Left lung (tissue), 14 donors: ENCODE measurements at regions of chr2 and their contacts with region 1.

Region 1: GRCh38 chr2:177212106-177212890 is at the start of gene HNRNPA3:
- DNase-seq: peak; percentile 99 to 100 (median 100)
- ATAC-seq: peak; percentile 97
- H3K4me3 ChIP-seq: peak within 1 kb of the TSS; percentile 85
- H3K27ac ChIP-seq: peak within 1 kb of the TSS; percentile 100
- H3K4me1 ChIP-seq: peaks cover 22 to 51% of the 10 kb centered on the region in 2 donors
- H3K27me3 ChIP-seq: no peaks in the 10 kb centered on the region
- CTCF ChIP-seq: no peak
- polyA plus RNA-seq, gene HNRNPA3: 501 to 688 (median 592) TPM

Region 2: DNA sequence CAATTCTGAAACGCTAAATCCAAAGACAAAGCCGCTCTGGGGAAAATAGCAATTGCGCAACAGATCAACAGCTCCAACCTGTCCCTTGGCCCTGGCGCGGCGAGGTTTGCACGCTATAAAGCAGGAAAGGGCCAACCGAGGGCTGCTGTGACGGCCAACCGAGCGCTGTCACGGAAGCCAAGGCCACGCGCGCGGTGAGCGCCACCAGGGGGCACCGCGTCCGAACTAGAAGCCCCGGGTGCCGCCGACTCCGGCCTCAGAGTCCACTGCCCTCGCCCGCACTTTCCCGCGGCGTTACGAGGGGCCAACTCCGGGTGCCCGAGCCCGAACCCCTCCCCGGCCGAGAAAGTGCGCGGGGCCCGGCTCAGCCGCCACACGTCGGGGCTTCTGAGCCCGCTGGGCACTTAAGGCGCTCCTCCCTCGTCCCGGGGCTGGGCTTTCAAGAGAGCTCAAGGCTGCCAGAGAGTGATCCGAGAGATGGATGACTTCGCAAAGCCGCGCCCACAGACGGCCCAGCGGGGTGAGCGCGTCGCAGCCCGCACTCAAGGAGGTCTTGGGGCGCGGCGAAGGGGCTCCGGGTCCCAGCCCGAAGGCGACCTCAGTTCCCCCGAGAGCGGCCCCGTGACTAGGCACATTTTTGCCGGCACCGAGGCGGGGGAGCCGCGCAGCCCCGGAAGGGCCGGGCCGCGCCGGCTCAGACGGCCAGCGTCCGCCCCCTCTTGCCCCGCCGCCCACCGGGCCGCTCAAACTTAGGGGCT is 51.3 kb after region 1 on chr2:
- intact Hi-C with region 1: loop called in 1 of 2 experiments (anchors 5 kb)
- DNase-seq: peak; percentile 98 to 99 (median 99)
- ATAC-seq: peak; percentile 80
- H3K4me3 ChIP-seq: peak overlapping the region; percentile 94
- H3K27ac ChIP-seq: peak overlapping the region; percentile 100
- H3K4me1 ChIP-seq: peaks cover 22 to 56% of the 10 kb centered on the region in 2 donors
- H3K27me3 ChIP-seq: no peaks in the 10 kb centered on the region
- CTCF ChIP-seq: peak; percentile 58 to 87